ENCODE measurements at regions of chr18 and their contacts with region 1.

Region 1: GRCh38 chr18:51029694-51030536 is at the start of gene SMAD4:
- DNase-seq: peak; percentile 65
- H3K4me3 ChIP-seq: peak within 1 kb of the TSS; percentile 84
- CTCF ChIP-seq: no peak

Region 2: GRCh38 chr18:50878345-50879301 is 151.3 kb before region 1 on chr18 and contains the start of gene ME2:
- CTCF ChIA-PET with region 1: no interaction called
- POLR2A ChIA-PET with region 1: interaction called, 10 read pairs
- DNase-seq: no peak
- H3K4me3 ChIP-seq: peak within 1 kb of the TSS; percentile 92
- CTCF ChIP-seq: no peak

Region 3: DNA sequence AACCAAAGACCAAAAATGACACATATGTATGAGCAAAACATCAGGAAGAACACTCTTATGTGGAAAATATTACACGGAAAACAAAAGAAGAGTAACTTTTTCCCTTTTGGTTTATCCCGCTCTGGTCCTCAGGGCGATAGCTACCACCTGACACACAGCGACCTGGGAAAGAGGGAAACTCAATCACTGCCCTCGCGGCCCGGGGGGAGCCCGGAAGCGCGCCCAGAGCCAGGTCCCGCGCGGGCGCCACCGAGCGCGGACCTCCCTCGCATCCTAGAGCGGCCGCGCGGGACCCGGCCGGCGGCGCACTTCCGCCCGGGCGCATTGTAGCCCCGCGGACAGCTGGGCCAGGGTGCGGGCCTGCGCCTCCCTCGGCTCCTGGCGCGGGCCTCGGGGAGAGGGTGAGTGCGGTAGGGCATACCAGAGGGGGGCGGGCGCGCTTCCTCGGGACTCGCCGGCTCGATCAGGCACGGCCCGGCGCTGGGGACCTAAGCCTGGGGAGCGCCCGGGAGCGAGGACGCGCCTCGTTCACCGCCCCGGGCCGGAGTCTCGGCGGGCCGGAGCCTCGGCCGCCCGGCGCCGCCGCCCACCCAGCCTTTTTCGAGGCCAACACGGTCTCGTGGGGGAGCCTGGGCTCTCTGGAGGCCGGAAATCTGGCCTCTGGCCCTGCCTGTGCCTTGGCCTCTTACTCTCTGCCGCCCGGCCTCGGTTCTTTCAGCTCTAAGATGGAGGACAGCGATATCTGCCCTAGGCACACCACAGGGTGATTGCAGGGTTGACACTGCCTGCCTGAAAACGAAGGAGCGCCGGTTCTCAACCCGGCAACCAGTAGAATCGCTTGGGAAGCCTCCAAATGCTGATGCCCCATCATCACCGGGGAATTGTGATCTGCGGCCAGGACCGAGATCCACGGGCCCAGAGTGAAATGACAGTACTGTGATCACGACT is 61.9 kb before region 1 on chr18 and contains the start of gene ELAC1:
- CTCF ChIA-PET with region 1: no interaction called
- POLR2A ChIA-PET with region 1: interaction called, 11 read pairs
- DNase-seq: no peak
- H3K4me3 ChIP-seq: peak within 1 kb of the TSS; percentile 81
- CTCF ChIP-seq: no peak

Measured in AG04449 (cell line).